ENCODE measurements at regions of chr7 and their contacts with region 1.

Region 1: DNA sequence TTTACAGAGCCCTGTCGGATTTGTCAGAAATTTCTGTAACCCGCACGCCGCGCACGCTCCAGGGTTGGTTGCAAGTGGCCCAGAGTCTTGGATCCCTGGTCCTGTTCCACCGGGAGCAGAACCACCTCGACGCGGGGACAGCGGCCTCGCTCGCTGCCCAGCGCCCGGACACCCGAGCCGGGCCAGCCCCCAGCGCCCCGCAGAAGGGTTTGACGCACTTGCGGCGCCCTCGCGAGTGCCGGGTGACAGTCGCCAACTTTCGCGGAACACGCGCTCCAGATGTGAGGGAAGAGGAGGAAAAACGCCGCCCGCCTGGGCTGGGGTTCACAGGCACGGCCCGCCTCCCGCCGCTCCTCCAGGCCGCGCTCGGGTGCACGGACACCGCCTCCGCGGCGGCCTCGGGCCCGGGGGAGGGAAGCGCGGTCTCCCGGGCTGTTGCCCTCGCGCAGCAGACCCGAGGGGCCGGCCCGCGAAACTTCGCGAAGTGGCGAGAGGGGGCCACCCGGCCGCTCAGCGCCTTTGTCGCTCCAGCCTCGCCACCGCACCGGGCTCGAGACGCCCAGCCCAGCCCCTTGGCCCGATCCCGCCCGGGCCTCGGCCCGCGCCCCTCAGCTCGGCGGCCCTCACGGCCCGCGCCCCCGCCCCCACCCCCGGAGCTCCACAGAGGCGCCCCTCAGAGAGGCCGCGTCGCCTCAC is 514 bp downstream of the RNF216 start:
- H3K4me3 Mint-ChIP-seq: peak overlapping the region; percentile 92
- H3K27ac Mint-ChIP-seq: peak overlapping the region; percentile 89
- H3K4me1 Mint-ChIP-seq: peaks cover 32% of the 10 kb centered on the region
- H3K27me3 Mint-ChIP-seq: no peaks in the 10 kb centered on the region

Region 2: GRCh38 chr7:5653661-5654060 is 127.3 kb before region 1 on chr7:
- intact Hi-C with region 1: no loop called
- H3K4me3 Mint-ChIP-seq: no peak overlapping the region
- H3K27ac Mint-ChIP-seq: no peak overlapping the region
- H3K4me1 Mint-ChIP-seq: no peaks in the 10 kb centered on the region
- H3K27me3 Mint-ChIP-seq: no peaks in the 10 kb centered on the region

Region 3: GRCh38 chr7:5822742-5823503 is 42.0 kb after region 1 on chr7:
- intact Hi-C with region 1: loop called (anchors 5 kb)
- H3K4me3 Mint-ChIP-seq: peak overlapping the region; percentile 86
- H3K27ac Mint-ChIP-seq: peak overlapping the region; percentile 88
- H3K4me1 Mint-ChIP-seq: peaks cover 20% of the 10 kb centered on the region
- H3K27me3 Mint-ChIP-seq: no peaks in the 10 kb centered on the region